ENCODE measurements at regions of chr12 and their contacts with region 1.

Region 1: DNA sequence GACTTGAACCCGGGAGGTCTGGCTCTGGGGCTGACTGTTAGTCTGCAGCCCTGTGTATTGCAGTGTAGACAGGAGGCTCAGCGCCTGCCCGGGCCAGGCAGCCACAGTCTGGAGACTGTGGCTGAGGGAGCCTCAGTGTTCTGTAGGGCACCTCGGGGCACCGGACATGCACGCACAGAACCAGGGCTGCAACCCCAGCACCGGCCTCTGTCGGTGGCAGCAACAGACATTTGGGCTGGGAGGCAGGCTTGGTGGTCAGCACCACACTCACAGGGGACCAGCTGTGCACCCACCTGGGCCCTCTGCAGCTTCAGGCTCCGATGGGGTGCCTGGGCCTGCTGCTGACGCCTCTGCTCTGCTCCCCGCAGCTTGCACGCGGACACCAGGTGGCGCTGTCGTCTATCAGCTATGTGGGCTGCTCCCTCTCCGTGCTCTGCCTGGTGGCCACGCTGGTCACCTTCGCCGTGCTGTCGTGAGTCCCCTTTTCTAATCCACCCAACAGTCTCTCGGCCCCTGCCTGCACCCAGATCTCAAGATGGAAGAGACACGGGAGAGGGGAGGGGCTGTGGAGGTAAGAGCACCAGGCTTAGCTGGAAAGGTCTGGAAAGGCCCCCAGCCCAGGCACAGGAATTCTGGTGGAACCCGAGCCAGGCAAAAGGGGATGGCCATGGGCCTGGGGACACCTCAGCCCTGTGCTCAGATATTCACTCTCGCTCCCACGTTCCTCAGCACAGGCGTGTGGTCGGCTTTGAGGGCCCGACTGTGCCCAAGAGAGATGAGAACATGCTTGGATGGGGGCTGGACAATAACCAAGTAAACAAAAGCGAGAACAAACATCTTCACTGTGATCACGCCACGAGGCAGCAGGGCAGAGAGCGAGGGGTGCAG is 151.0 kb downstream of the ADGRD1 start:
- DNase-seq: peak; percentile 66
- ATAC-seq: peak; percentile 75
- H3K4me3 Mint-ChIP-seq: no peak overlapping the region
- H3K27ac Mint-ChIP-seq: no peak overlapping the region
- H3K4me1 Mint-ChIP-seq: peaks cover 15% of the 10 kb centered on the region
- H3K27me3 Mint-ChIP-seq: peaks cover 8% of the 10 kb centered on the region
- CTCF ChIP-seq: peak; percentile 68

Region 2: DNA sequence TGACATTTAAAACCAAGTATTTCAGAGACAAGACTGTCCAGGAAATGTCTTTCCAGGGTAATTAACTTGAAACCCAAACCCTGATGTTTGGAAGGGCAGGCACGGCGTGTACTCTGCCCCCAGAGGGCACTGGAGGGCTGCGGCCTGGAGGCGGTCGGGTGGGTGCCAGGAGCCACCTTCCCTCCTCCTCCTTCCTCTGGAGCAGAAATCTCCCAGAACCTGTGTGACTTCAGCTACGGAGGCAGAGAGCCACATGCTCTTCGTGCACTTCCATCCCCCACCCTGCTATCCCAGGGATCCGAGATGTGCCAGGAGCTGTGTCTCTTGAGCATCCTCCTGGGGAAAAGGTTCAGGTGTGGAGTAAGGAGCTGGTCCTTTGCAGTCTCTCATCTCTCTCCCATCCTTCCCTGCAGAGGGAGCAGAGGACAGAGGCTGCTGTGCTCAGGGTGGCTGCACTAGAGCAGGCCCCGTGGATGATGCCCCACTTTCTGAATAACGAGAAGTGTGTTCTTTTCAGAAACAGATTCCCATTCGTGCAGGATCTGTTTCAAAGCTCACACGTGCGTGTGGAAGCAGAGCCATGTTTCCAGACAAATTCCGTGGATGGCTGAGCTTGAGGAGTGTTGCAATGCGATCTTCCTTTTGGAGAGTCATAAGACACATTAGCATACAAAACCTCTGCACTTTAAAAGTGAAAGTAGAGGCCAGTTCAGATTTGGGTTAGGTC is 11.8 kb after region 1 on chr12:
- CTCF ChIA-PET with region 1: interaction called, 14 read pairs
- POLR2A ChIA-PET with region 1: no interaction called
- intact Hi-C with region 1: no loop called
- DNase-seq: no peak
- ATAC-seq: no peak
- H3K4me3 Mint-ChIP-seq: no peak overlapping the region
- H3K27ac Mint-ChIP-seq: no peak overlapping the region
- H3K4me1 Mint-ChIP-seq: no peaks in the 10 kb centered on the region
- H3K27me3 Mint-ChIP-seq: peaks cover 18% of the 10 kb centered on the region
- CTCF ChIP-seq: no peak

Region 3: DNA sequence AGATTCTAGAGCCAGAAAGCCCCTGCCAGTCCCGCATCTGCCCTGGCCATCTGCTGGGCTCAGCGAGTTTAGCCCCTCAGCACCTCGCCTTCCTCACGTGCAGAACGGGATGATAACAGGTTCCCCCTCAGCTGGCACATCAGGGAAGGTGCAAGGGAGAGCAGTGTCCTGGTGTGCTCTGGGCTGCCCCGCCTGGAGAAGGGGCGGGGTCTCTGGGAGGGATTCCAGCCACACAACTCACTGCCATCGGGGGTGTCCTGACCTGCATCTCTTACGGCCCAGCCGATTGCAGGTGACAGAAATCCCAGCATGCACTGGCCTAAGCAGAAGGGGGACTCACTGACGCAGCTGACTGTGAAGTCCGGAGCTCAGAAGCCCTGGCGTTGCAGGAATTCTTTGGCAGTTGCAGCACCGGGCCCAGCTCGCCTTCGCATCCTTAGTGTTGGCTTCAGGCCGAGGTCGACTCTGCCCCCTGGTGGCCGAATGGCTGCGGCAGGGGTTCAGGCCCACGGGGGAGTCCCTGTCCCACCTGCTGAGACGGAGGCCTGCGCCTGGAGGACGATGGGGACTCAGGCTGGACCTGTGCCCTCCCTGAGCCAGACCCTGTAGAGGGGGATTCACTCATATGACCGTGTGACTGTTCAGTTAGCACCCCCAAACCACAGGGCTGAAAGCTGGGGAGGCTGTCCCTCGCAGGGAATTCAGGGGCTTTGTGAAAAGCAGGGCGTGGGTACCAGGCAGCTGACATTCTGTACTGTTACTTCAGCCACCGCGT is 27.6 kb after region 1 on chr12:
- CTCF ChIA-PET with region 1: interaction called, 43 read pairs
- POLR2A ChIA-PET with region 1: interaction called, 3 read pairs
- intact Hi-C with region 1: loop called (anchors 1 kb)
- DNase-seq: peak; percentile 72
- ATAC-seq: peak; percentile 77
- H3K4me3 Mint-ChIP-seq: no peak overlapping the region
- H3K27ac Mint-ChIP-seq: no peak overlapping the region
- H3K4me1 Mint-ChIP-seq: no peaks in the 10 kb centered on the region
- H3K27me3 Mint-ChIP-seq: peaks cover 2% of the 10 kb centered on the region
- CTCF ChIP-seq: no peak

Region 4: DNA sequence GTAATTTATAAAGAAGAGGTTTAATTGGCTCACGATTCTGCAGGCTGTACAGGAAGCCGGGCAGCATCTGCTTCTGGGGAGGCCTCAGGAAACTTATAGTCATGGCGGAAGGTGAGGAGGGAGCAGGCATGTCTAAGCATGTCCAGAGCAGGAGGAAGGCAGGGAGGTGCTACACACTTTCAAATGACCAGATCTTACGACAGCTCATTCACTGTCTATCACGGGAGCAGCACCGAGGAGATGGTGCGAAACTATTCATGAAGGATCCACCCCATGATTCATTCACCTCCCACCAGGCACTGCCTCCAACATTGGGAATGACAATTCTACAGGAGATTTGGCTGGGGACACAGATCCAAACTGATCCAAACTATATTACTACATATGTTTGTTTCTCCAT is 616.2 kb after region 1 on chr12:
- CTCF ChIA-PET with region 1: interaction called, 3 read pairs
- POLR2A ChIA-PET with region 1: no interaction called
- intact Hi-C with region 1: loop called (anchors 10 kb)
- DNase-seq: no peak
- ATAC-seq: no peak
- H3K4me3 Mint-ChIP-seq: no peak overlapping the region
- H3K27ac Mint-ChIP-seq: no peak overlapping the region
- H3K4me1 Mint-ChIP-seq: no peaks in the 10 kb centered on the region
- H3K27me3 Mint-ChIP-seq: no peaks in the 10 kb centered on the region
- CTCF ChIP-seq: no peak

Region 5: DNA sequence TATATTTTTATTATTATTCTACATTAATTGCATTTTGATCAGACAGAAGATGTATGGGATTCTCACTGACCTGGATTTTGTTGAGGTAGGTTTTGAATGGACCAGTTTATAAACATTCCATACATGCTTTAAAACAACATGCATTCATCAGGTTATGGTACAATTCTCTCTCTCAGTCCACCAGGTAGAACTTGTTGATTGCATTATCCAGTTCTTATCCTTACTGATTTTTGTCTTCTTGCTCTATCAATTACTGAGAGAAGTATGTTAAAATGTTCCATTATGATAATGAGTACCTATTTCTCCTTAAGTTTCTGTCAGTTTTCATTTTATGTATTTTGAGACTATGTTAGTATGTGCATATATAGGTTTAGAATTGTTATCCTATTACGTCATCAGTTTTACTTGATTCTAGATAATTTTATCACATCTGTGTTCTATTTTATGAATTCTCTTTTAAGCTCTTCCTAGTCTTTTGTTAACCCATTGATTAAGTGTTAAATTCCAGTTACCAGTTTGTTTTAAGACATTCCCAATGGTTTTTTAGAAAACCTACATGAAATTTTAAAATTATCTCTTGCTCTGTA is 895.7 kb after region 1 on chr12:
- CTCF ChIA-PET with region 1: no interaction called
- POLR2A ChIA-PET with region 1: no interaction called
- intact Hi-C with region 1: loop called (anchors 2 kb)
- DNase-seq: no peak
- ATAC-seq: no peak
- H3K4me3 Mint-ChIP-seq: no peak overlapping the region
- H3K27ac Mint-ChIP-seq: no peak overlapping the region
- H3K4me1 Mint-ChIP-seq: no peaks in the 10 kb centered on the region
- H3K27me3 Mint-ChIP-seq: no peaks in the 10 kb centered on the region
- CTCF ChIP-seq: no peak

Measured in activated B cell treated with CpG ODN at 0.5 μM for 24 hours (primary cell).